ENCODE measurements at regions of chrX and their contacts with region 1.

Region 1: GRCh38 chrX:15930585-15930984 is 76.0 kb upstream of the AP1S2 start:
- DNase-seq: no peak
- ATAC-seq: peak; percentile 63; the same call in 1 of the 2 replicates
- H3K4me3 ChIP-seq: no peak overlapping the region
- H3K27ac ChIP-seq: no peak overlapping the region
- H3K4me1 ChIP-seq: no peaks in the 10 kb centered on the region
- H3K27me3 ChIP-seq: no peaks in the 10 kb centered on the region
- CTCF ChIP-seq: peak in 2 of 3 experiments; percentile 23 to 31; a peak in 2 of 6 replicates
- POLR2A ChIP-seq: no peak
- RAD21 ChIP-seq: peak; percentile 61

Region 2: DNA sequence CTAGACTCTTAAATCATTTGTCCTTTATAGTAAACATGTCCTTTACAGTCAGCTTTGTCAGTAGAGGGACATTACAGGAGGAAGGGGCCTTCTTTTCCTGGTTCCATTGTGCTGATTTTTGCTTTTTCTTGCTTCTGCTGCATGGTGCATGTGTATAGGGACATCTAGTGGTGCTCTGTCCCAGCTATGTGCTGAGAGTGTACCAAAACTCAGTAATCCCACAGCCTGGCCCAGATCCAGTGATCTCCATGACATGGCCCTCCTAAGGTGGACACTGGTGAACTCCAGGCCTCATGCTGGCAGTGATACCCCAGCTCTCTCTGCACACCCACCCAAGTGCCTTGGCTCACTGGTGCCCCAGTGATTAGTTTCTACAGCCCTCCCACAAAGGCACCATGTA is 281.9 kb after region 1 on chrX:
- CTCF ChIA-PET with region 1: interaction called, 12 read pairs
- POLR2A ChIA-PET with region 1: no interaction called
- RAD21 ChIA-PET with region 1: interaction called, 3 read pairs
- intact Hi-C with region 1: loop called (anchors 2 kb)
- DNase-seq: peak; percentile 7
- ATAC-seq: peak; percentile 87
- H3K4me3 ChIP-seq: no peak overlapping the region
- H3K27ac ChIP-seq: no peak overlapping the region
- H3K4me1 ChIP-seq: peaks cover 0 to 12% of the 10 kb centered on the region in 2 experiments; a peak in 2 of 4 replicates
- H3K27me3 ChIP-seq: no peaks in the 10 kb centered on the region
- CTCF ChIP-seq: peak; percentile 40 to 58 (median 45); a peak in 5 of 6 replicates
- POLR2A ChIP-seq: no peak
- RAD21 ChIP-seq: peak; percentile 77

Region 3: GRCh38 chrX:16436348-16437188 is 506.0 kb after region 1 on chrX:
- CTCF ChIA-PET with region 1: interaction called, 4 read pairs
- POLR2A ChIA-PET with region 1: no interaction called
- RAD21 ChIA-PET with region 1: no interaction called
- intact Hi-C with region 1: loop called (anchors 10 kb)
- DNase-seq: peak; percentile 65
- ATAC-seq: peak; percentile 99
- H3K4me3 ChIP-seq: no peak overlapping the region
- H3K27ac ChIP-seq: no peak overlapping the region
- H3K4me1 ChIP-seq: peaks cover 0 to 4% of the 10 kb centered on the region in 2 experiments; a peak in 2 of 4 replicates
- H3K27me3 ChIP-seq: no peaks in the 10 kb centered on the region
- CTCF ChIP-seq: peak; percentile 40 to 63 (median 56); a peak in 5 of 6 replicates
- POLR2A ChIP-seq: no peak
- RAD21 ChIP-seq: peak; percentile 51

Region 4: GRCh38 chrX:16670998-16671397 is 740.4 kb after region 1 on chrX:
- CTCF ChIA-PET with region 1: no interaction called
- POLR2A ChIA-PET with region 1: no interaction called
- RAD21 ChIA-PET with region 1: no interaction called
- intact Hi-C with region 1: loop called (anchors 2 kb)
- DNase-seq: peak; percentile 12
- ATAC-seq: 0 out of 2 replicates have a peak, but pooled peaks have one; percentile 38
- H3K4me3 ChIP-seq: no peak overlapping the region
- H3K27ac ChIP-seq: no peak overlapping the region
- H3K4me1 ChIP-seq: no peaks in the 10 kb centered on the region
- H3K27me3 ChIP-seq: no peaks in the 10 kb centered on the region
- CTCF ChIP-seq: peak in 2 of 3 experiments; percentile 18 to 22; a peak in 2 of 6 replicates
- POLR2A ChIP-seq: no peak
- RAD21 ChIP-seq: peak; percentile 64

Measured in HCT116 (cell line).